PC-3 (cell line): ENCODE measurements at regions of chr7 and their contacts with region 1.

Region 1: GRCh38 chr7:115217373-115217772 is 295.5 kb downstream of the MDFIC start:
- DNase-seq: peak; percentile 34
- ATAC-seq: peak; percentile 38; the same call in 1 of the 2 replicates
- H3K4me3 ChIP-seq: no peak overlapping the region
- H3K27ac ChIP-seq: no peak overlapping the region
- H3K4me1 ChIP-seq: peaks cover 6% of the 10 kb centered on the region; the same call in 1 of the 2 replicates
- H3K27me3 ChIP-seq: no peaks in the 10 kb centered on the region
- CTCF ChIP-seq: peak; percentile 59

Region 2: DNA sequence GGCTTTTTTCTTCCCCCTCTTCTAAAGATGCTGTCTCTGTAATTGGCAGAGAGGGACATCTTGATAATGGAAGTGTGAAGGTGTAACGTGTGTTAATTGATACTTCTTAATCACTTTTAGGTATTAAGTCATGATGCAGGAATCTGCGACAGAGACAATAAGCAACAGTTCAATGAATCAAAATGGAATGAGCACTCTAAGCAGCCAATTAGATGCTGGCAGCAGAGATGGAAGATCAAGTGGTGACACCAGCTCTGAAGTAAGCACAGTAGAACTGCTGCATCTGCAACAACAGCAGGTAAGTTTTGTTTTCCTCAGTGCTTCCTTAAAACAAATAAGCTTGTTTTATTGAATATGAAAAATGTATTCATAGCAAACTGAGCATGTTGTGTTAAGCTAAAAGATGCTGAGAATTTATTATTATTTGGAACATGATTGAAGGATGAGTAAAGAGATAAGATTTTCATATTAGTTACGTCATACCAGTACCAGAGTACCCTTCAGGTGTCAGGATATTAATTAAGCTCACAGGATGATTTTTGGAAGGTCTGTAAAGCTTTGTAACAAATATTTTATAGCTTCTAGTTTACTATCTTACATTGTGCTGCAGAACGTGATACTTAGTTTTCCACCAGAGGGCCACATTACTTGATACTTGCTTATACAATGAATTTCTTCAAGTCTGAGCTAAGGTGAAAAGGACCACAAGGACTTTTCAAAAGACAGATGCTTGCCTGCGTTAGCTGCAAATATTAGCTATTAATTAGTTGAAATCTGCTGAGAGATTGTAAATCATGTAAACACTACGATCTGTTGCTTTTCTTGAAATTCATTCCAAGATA is 790.8 kb before region 1 on chr7:
- CTCF ChIA-PET with region 1: no interaction called
- POLR2A ChIA-PET with region 1: no interaction called
- intact Hi-C with region 1: loop called (anchors 10 kb)
- DNase-seq: peak; percentile 37
- ATAC-seq: peak; percentile 65; the same call in 1 of the 2 replicates
- H3K4me3 ChIP-seq: no peak overlapping the region
- H3K27ac ChIP-seq: no peak overlapping the region
- H3K4me1 ChIP-seq: no peaks in the 10 kb centered on the region
- H3K27me3 ChIP-seq: peaks cover 41% of the 10 kb centered on the region
- CTCF ChIP-seq: peak; percentile 53

Region 3: GRCh38 chr7:114653364-114654088 is 563.8 kb before region 1 on chr7:
- CTCF ChIA-PET with region 1: no interaction called
- POLR2A ChIA-PET with region 1: no interaction called
- intact Hi-C with region 1: loop called (anchors 10 kb)
- DNase-seq: peak; percentile 21
- ATAC-seq: peak; percentile 48
- H3K4me3 ChIP-seq: peak overlapping the region; percentile 29
- H3K27ac ChIP-seq: no peak overlapping the region
- H3K4me1 ChIP-seq: 0 out of 2 replicates have a peak, but pooled peaks cover 9% of the 10 kb centered on the region
- H3K27me3 ChIP-seq: peaks cover 69% of the 10 kb centered on the region
- CTCF ChIP-seq: no peak

Region 4: DNA sequence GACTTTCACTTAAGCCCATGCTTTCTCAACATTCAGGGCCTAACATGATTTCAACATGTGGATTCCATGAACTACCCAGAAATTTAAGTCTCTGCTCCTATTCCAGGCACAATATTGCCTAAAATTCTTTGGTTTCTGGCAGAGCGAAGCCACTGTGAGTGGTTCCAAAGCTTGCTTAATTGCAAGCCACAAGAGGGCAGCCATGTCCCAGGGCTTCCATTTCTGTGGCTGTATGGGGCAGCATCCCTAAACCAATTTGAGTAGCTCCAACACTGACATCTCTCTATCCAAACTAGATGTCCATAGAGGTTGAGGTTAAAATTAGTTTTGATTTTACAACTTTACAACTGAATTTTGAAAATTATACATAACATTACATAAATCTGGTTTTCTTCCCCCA is 351.8 kb before region 1 on chr7:
- CTCF ChIA-PET with region 1: interaction called, 12 read pairs
- POLR2A ChIA-PET with region 1: no interaction called
- intact Hi-C with region 1: loop called (anchors 1 kb)
- DNase-seq: peak; percentile 60
- ATAC-seq: peak; percentile 82; the same call in 1 of the 2 replicates
- H3K4me3 ChIP-seq: no peak overlapping the region
- H3K27ac ChIP-seq: no peak overlapping the region
- H3K4me1 ChIP-seq: peaks cover 11% of the 10 kb centered on the region
- H3K27me3 ChIP-seq: no peaks in the 10 kb centered on the region
- CTCF ChIP-seq: peak; percentile 87

Region 5: DNA sequence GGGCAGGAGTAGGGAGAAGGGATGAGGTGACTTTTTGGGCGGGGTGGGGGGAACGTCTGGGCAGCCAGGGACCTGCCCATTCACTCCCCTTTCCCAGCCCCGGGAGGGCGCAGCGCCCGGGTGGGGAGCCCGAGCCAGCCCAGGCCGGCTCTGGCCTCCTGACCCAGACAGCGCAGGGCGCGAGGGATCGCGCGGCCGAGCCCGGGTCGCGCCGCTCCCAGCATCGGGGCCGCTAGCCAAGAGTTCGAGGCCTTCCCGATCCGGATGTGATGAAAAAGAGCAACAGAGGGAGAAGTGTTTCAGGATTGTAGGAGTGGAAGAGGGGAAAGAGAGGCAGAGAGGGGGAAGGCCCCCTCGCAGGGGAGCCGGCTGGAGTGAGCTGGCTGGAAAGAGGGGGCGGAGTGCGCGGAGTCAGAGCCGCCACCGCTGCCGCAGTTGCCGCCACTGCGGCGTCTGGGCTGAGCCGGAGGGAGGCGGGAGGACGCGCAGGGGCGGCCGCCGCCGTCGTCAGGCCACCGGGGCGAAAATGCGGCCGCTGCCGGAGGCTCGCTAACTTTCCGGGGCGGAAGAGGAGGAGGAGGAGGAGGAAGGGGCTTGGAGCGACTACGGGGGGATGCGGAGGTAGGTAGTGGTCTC is 295.2 kb before region 1 on chr7 and contains the start of gene MDFIC:
- CTCF ChIA-PET with region 1: no interaction called
- POLR2A ChIA-PET with region 1: no interaction called
- intact Hi-C with region 1: loop called (anchors 5 kb)
- DNase-seq: peak; percentile 45
- ATAC-seq: peak; percentile 61
- H3K4me3 ChIP-seq: peak within 1 kb of the TSS; percentile 78
- H3K27ac ChIP-seq: peak within 1 kb of the TSS; percentile 11
- H3K4me1 ChIP-seq: peaks cover 13% of the 10 kb centered on the region
- H3K27me3 ChIP-seq: no peaks in the 10 kb centered on the region
- CTCF ChIP-seq: no peak
- total RNA-seq, gene MDFIC: 31.6 and 33.9 TPM in 2 replicates